Natural killer cell (primary cell): ENCODE measurements at regions of chr1 and their contacts with region 1.

Region 1: DNA sequence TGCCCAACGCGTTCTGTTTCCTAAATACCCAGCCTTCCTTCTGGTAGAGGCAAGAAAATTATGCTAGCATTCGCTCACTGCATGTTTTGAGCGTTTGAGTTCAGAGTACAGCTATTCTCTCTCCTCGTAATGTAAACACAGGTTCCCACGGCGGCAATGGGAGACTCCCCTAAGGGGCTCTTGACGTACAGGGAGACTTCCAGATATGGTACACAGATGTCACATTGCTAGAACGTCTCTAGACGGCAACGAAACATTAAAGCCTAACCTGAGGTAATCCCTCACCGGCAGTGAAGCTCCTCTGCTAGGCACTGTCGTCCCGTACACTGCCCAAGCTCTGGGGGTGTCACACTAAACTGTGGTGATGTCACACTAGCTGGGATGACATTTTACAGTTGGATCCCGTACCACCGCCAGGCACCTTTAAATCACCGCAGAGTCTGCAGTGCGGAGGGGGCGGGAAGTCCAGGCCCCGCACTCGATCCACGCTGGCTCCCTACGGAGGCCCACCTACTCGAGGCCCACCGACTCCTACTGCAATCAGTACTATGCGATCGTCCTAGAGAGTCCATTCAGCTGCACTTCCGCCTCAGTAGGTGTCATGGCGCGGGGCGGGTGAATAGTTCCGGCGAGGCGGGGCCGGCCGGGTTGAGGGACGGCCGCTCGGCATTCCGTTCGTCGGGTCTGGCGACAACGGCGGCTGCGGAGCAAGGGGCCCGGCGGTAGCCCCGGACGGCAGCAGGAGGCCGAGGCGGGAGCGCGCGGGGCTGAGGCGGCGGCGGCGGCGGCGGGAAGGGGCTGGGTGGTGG is at the start of gene HIPK1:
- DNase-seq: peak; percentile 91 to 94
- ATAC-seq: peak; percentile 57 to 82 (median 58)
- H3K4me3 ChIP-seq: peak within 1 kb of the TSS; percentile 80
- H3K4me3 Mint-ChIP-seq: peak within 1 kb of the TSS; percentile 98
- H3K27ac ChIP-seq: peak within 1 kb of the TSS; percentile 98
- H3K27ac Mint-ChIP-seq: peak within 1 kb of the TSS; percentile 96 to 99
- H3K4me1 ChIP-seq: peaks cover 28% of the 10 kb centered on the region
- H3K4me1 Mint-ChIP-seq: peaks cover 55 to 59% of the 10 kb centered on the region in 2 donors
- H3K27me3 ChIP-seq: no peaks in the 10 kb centered on the region
- H3K27me3 Mint-ChIP-seq: no peaks in the 10 kb centered on the region
- CTCF ChIP-seq: no peak
- total RNA-seq, gene HIPK1: 238 to 283 (median 261) TPM

Region 2: GRCh38 chr1:113765306-113766230 is 163.6 kb before region 1 on chr1:
- intact Hi-C with region 1: no loop called
- DNase-seq: no peak
- ATAC-seq: no peak
- H3K4me3 ChIP-seq: no peak overlapping the region
- H3K4me3 Mint-ChIP-seq: no peak overlapping the region
- H3K27ac ChIP-seq: no peak overlapping the region
- H3K27ac Mint-ChIP-seq: peak overlapping the region in 1 of 2 donors; percentile 54
- H3K4me1 ChIP-seq: no peaks in the 10 kb centered on the region
- H3K4me1 Mint-ChIP-seq: peaks cover 16 to 17% of the 10 kb centered on the region in 2 donors
- H3K27me3 ChIP-seq: no peaks in the 10 kb centered on the region
- H3K27me3 Mint-ChIP-seq: no peaks in the 10 kb centered on the region
- CTCF ChIP-seq: no peak

Region 3: DNA sequence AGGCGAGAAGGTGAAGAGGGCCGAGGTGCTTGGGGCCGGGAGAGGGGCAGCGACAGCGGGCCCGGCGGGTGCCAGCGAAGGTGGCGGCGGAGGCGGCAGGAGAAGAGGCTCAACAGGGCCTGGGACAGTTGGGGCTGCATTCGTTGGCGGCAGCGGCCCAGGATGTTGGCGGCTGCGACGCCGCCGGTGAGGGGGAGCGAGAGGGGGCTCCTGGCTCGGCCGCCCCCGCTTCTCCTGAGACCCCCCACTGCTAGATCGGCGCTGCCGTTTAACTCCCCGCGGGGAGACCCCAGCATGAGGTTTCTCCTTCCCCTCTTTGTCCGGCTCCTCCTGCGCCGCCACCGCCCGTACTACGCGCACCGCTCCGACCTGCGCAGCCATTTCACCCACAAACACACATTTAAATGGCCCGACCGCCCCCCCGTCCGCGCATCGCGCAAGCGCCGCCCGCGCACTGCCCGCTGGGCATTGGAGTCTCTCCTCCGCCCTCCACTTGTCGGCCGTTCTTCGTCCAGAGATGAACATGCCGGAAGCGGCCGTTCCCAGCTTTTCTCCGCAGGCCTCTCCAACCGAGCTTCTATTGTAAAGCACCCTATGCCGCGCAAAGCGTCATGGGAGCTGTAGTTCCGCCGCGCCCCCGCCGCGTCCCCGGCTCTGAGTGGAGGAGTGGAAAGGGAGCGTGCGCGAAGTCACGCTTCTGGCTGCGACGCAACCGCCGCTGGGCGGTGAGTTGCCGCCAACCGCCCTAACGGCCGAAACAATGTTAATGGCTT is 117.1 kb before region 1 on chr1 and contains the start of gene RSBN1:
- intact Hi-C with region 1: loop called (anchors 1 kb)
- DNase-seq: peak; percentile 94 to 98
- ATAC-seq: peak; percentile 84 to 97 (median 88)
- H3K4me3 ChIP-seq: peak within 1 kb of the TSS; percentile 85
- H3K4me3 Mint-ChIP-seq: peak within 1 kb of the TSS; percentile 98
- H3K27ac ChIP-seq: peak within 1 kb of the TSS; percentile 97
- H3K27ac Mint-ChIP-seq: peak within 1 kb of the TSS; percentile 95
- H3K4me1 ChIP-seq: peaks cover 8% of the 10 kb centered on the region
- H3K4me1 Mint-ChIP-seq: peaks cover 37 to 38% of the 10 kb centered on the region in 2 donors
- H3K27me3 ChIP-seq: no peaks in the 10 kb centered on the region
- H3K27me3 Mint-ChIP-seq: no peaks in the 10 kb centered on the region
- CTCF ChIP-seq: no peak
- total RNA-seq, gene RSBN1: 30.1 to 37.9 (median 36.5) TPM

Region 4: GRCh38 chr1:113871597-113872113 is 57.5 kb before region 1 on chr1 and contains the start of gene PTPN22:
- intact Hi-C with region 1: loop called (anchors 1 kb)
- DNase-seq: peak; percentile 75 to 94
- ATAC-seq: peak; percentile 75 to 93 (median 92)
- H3K4me3 ChIP-seq: peak within 1 kb of the TSS; percentile 70
- H3K4me3 Mint-ChIP-seq: peak within 1 kb of the TSS; percentile 94
- H3K27ac ChIP-seq: peak within 1 kb of the TSS; percentile 92
- H3K27ac Mint-ChIP-seq: peak within 1 kb of the TSS; percentile 87 to 95
- H3K4me1 ChIP-seq: peaks cover 49% of the 10 kb centered on the region
- H3K4me1 Mint-ChIP-seq: peaks cover 78 to 85% of the 10 kb centered on the region in 2 donors
- H3K27me3 ChIP-seq: no peaks in the 10 kb centered on the region
- H3K27me3 Mint-ChIP-seq: no peaks in the 10 kb centered on the region
- CTCF ChIP-seq: no peak
- total RNA-seq, gene PTPN22: 98.4 to 122 (median 104) TPM

Region 5: GRCh38 chr1:113940365-113941244 is 11.5 kb after region 1 on chr1:
- intact Hi-C with region 1: loop called (anchors 1 kb)
- DNase-seq: peak; percentile 55 to 78
- ATAC-seq: peak; percentile 55 to 75 (median 73)
- H3K4me3 ChIP-seq: no peak overlapping the region
- H3K4me3 Mint-ChIP-seq: peak overlapping the region; percentile 77
- H3K27ac ChIP-seq: peak overlapping the region; percentile 67
- H3K27ac Mint-ChIP-seq: peak overlapping the region; percentile 91 to 99
- H3K4me1 ChIP-seq: peaks cover 46% of the 10 kb centered on the region
- H3K4me1 Mint-ChIP-seq: peaks cover 62 to 74% of the 10 kb centered on the region in 2 donors
- H3K27me3 ChIP-seq: no peaks in the 10 kb centered on the region
- H3K27me3 Mint-ChIP-seq: no peaks in the 10 kb centered on the region
- CTCF ChIP-seq: no peak

Region 6: GRCh38 chr1:113978863-113979702 is 49.9 kb after region 1 on chr1 and contains the start of gene OLFML3:
- intact Hi-C with region 1: loop called (anchors 2 kb)
- DNase-seq: peak; percentile 49 to 70
- ATAC-seq: peak; percentile 27 to 42 (median 37)
- H3K4me3 ChIP-seq: no peak within 1 kb of the TSS
- H3K4me3 Mint-ChIP-seq: peak within 1 kb of the TSS; percentile 42
- H3K27ac ChIP-seq: no peak within 1 kb of the TSS
- H3K27ac Mint-ChIP-seq: peak within 1 kb of the TSS; percentile 49 to 83
- H3K4me1 ChIP-seq: peaks cover 35% of the 10 kb centered on the region
- H3K4me1 Mint-ChIP-seq: peaks cover 54 to 65% of the 10 kb centered on the region in 2 donors
- H3K27me3 ChIP-seq: no peaks in the 10 kb centered on the region
- H3K27me3 Mint-ChIP-seq: no peaks in the 10 kb centered on the region
- CTCF ChIP-seq: peak; percentile 76
- total RNA-seq, gene OLFML3: 0.16 TPM in 1 of 3 donors, not detected in the others

Region 7: GRCh38 chr1:114757455-114758250 is 828.5 kb after region 1 on chr1 and contains the start of gene CSDE1:
- intact Hi-C with region 1: loop called (anchors 2 kb)
- DNase-seq: peak; percentile 97 to 99
- ATAC-seq: peak; percentile 77 to 92 (median 81)
- H3K4me3 ChIP-seq: peak within 1 kb of the TSS; percentile 95
- H3K4me3 Mint-ChIP-seq: peak within 1 kb of the TSS; percentile 99
- H3K27ac ChIP-seq: peak within 1 kb of the TSS; percentile 96
- H3K27ac Mint-ChIP-seq: peak within 1 kb of the TSS; percentile 99 to 100
- H3K4me1 ChIP-seq: peaks cover 21% of the 10 kb centered on the region
- H3K4me1 Mint-ChIP-seq: peaks cover 43 to 48% of the 10 kb centered on the region in 2 donors
- H3K27me3 ChIP-seq: no peaks in the 10 kb centered on the region
- H3K27me3 Mint-ChIP-seq: no peaks in the 10 kb centered on the region
- CTCF ChIP-seq: no peak
- total RNA-seq, gene CSDE1: 461 to 473 (median 470) TPM